ENCODE measurements at regions of chr6 and their contacts with region 1.

Region 1: GRCh38 chr6:133916650-133917151 is 27.8 kb downstream of the TCF21 start:
- DNase-seq: peak; percentile 85
- H3K4me3 Mint-ChIP-seq: no peak overlapping the region
- H3K27ac Mint-ChIP-seq: no peak overlapping the region
- H3K4me1 Mint-ChIP-seq: no peaks in the 10 kb centered on the region
- H3K27me3 Mint-ChIP-seq: peaks cover 10% of the 10 kb centered on the region

Region 2: GRCh38 chr6:133568970-133569889 is 347.5 kb before region 1 on chr6:
- CTCF ChIA-PET with region 1: interaction called, 23 read pairs
- DNase-seq: no peak
- H3K4me3 Mint-ChIP-seq: no peak overlapping the region
- H3K27ac Mint-ChIP-seq: no peak overlapping the region
- H3K4me1 Mint-ChIP-seq: no peaks in the 10 kb centered on the region
- H3K27me3 Mint-ChIP-seq: peaks cover 11% of the 10 kb centered on the region

Region 3: DNA sequence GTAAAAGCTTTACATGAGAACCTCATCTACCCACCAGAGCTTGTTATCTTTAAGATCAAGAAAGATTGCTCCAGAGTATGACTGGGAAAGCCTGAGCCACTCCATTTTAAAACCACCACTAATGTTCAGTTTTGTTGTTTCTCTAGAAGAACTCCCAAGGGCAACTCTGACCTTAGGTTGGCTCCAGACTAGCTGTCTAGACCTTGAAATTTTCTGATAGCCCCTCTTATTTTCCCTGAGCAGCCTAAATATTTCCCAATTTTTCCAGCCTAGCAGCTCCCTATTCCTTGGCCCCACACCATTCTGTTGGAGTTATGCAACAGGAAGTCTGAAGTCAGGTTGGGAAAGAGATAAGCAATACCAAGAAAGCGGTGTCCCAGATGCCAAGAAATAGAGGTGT is 112.4 kb before region 1 on chr6:
- CTCF ChIA-PET with region 1: no interaction called
- DNase-seq: no peak
- H3K4me3 Mint-ChIP-seq: no peak overlapping the region
- H3K27ac Mint-ChIP-seq: no peak overlapping the region
- H3K4me1 Mint-ChIP-seq: no peaks in the 10 kb centered on the region
- H3K27me3 Mint-ChIP-seq: peaks cover 3% of the 10 kb centered on the region

Region 4: GRCh38 chr6:133837801-133838349 is 78.8 kb before region 1 on chr6:
- CTCF ChIA-PET with region 1: interaction called, 27 read pairs
- DNase-seq: peak; percentile 73
- H3K4me3 Mint-ChIP-seq: peak overlapping the region; percentile 61
- H3K27ac Mint-ChIP-seq: no peak overlapping the region
- H3K4me1 Mint-ChIP-seq: peaks cover 5% of the 10 kb centered on the region
- H3K27me3 Mint-ChIP-seq: peaks cover 12% of the 10 kb centered on the region

Region 5: DNA sequence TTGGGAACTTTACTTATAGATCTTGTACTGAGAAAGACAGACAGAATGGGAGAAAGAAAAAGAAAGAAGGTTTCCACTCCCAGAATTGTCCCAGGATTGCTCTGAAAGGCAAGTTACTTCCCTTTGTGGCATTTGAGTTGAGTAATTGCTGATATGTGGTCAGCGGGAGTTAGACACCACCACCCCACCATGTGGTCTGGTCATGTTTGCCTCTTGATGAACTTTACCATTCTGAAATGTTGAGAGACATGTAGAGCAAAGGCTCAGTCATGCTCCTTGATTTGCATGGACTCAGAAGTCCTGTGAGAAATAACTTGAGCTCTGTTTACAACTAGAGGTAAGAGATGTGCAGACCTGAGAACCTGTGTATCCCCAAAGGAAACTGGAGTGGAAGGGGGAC is 10.7 kb before region 1 on chr6:
- CTCF ChIA-PET with region 1: interaction called, 18 read pairs
- DNase-seq: no peak
- H3K4me3 Mint-ChIP-seq: no peak overlapping the region
- H3K27ac Mint-ChIP-seq: no peak overlapping the region
- H3K4me1 Mint-ChIP-seq: no peaks in the 10 kb centered on the region
- H3K27me3 Mint-ChIP-seq: peaks cover 43% of the 10 kb centered on the region

Region 6: DNA sequence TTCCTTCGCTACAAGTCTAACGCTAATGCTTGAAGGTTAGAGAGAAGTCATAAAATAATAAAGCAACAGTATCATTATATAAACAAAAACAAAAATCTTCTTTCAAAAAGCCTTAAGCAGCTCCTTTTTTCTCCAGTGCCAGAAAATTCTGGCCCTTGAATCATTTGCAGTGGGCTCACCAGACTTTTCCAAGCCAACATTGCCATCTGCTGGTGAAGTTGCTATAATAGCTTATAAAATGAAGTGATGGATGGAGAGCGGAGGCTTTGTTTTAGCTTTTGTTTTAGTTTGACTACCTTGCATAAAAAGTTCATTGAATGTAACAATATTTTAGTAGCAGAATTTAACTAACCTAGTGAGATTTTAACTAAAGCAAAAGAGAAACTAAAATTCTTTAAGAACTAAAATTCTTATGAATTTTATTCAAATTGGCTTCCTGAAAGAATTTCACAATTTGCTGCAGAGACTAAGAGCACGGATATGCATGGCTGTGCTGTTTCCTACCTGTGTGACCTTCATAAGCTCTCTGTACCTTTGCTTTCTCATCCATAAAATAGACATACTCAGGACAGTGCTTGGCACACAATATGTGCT is 180.5 kb after region 1 on chr6:
- CTCF ChIA-PET with region 1: interaction called, 188 read pairs
- DNase-seq: peak; percentile 79
- H3K4me3 Mint-ChIP-seq: no peak overlapping the region
- H3K27ac Mint-ChIP-seq: no peak overlapping the region
- H3K4me1 Mint-ChIP-seq: peaks cover 4% of the 10 kb centered on the region
- H3K27me3 Mint-ChIP-seq: peaks cover 14% of the 10 kb centered on the region

Measured in activated naive CD4-positive, alpha-beta T cell treated with anti-CD3 and anti-CD28 coated beads, Interleukin-2, amount 10 ng/mL, durations not matched to agents 7 days and 5 days (primary cell).